ENCODE measurements at regions of chr6 and their contacts with region 1.

Region 1: DNA sequence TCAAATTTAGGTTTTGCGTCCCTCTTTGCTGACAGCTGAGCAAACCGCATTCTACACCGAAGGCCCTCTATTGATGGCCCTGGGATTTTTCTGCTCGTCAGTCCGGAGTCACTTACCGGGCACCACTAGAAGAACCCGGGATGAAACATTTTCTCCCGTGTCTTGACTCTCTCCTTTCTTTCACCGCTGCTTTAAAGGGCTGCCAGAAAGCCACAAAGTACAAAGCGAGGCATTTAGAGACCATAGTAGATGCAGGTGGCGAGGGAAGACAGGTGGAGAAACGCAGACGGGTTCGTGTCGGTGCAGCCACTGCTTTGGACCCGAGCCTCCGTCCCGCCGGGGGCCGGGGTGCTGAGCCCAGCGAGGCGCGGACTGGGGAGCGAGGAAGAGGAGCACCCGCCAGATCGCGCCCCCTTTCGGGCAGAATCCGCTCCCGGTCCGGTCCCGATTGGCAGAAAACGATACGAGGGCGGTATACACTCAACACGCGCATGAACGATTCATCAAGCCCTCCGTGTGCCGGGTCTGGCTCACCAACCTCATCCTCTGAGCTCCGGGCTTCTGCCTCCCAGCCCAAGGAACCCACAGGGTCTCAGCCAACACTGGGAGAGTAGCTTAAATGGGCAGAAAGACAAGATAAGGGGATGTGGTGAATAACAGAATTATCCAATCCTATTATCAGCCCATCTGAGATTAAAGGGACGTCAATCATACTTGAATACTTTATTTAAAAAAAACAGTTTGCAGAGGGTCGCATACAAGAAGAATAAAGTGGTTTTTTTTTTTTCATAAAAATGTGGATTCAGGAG is 84.9 kb downstream of the TRIM27 start:
- DNase-seq: peak; percentile 90 to 96 (median 92)
- ATAC-seq: peak; percentile 94
- H3K4me3 ChIP-seq: peak overlapping the region; percentile 74
- H3K27ac ChIP-seq: peak overlapping the region; percentile 86
- H3K4me1 ChIP-seq: peaks cover 0 to 8% of the 10 kb centered on the region in 2 experiments; a peak in 2 of 5 replicates
- H3K27me3 ChIP-seq: no peaks in the 10 kb centered on the region
- CTCF ChIP-seq: peak; percentile 84 to 93 (median 88)
- EP300 ChIP-seq: no peak; the same call in 1 of the 2 replicates
- POLR2A ChIP-seq: peak; percentile 80
- RAD21 ChIP-seq: peak; percentile 69 to 73

Region 2: GRCh38 chr6:28769626-28770402 is 69.0 kb before region 1 on chr6:
- CTCF ChIA-PET with region 1: interaction called, 5 read pairs
- POLR2A ChIA-PET with region 1: interaction called, 6 read pairs
- in situ Hi-C with region 1: no loop called
- intact Hi-C with region 1: loop called (anchors 2 kb)
- DNase-seq: peak; percentile 60 to 87 (median 66)
- ATAC-seq: peak; percentile 82
- H3K4me3 ChIP-seq: no peak overlapping the region
- H3K27ac ChIP-seq: no peak overlapping the region
- H3K4me1 ChIP-seq: peaks cover 24 to 32% of the 10 kb centered on the region in 2 experiments; a peak in 4 of 5 replicates
- H3K27me3 ChIP-seq: no peaks in the 10 kb centered on the region
- CTCF ChIP-seq: peak; percentile 72 to 80 (median 78)
- EP300 ChIP-seq: no peak
- POLR2A ChIP-seq: no peak
- RAD21 ChIP-seq: peak; percentile 88 to 92

Region 3: GRCh38 chr6:28816909-28817807 is 21.7 kb before region 1 on chr6:
- CTCF ChIA-PET with region 1: interaction called, 3 read pairs
- POLR2A ChIA-PET with region 1: interaction called, 10 read pairs
- in situ Hi-C with region 1: no loop called
- intact Hi-C with region 1: no loop called
- DNase-seq: peak; percentile 63 to 95 (median 76)
- ATAC-seq: peak; percentile 91
- H3K4me3 ChIP-seq: peak overlapping the region; percentile 45
- H3K27ac ChIP-seq: peak overlapping the region; percentile 59
- H3K4me1 ChIP-seq: peaks cover 7 to 11% of the 10 kb centered on the region in 2 experiments; a peak in 4 of 5 replicates
- H3K27me3 ChIP-seq: no peaks in the 10 kb centered on the region
- CTCF ChIP-seq: no peak
- EP300 ChIP-seq: peak; percentile 77
- POLR2A ChIP-seq: no peak
- RAD21 ChIP-seq: no peak; a peak in 1 of 4 replicates

Region 4: GRCh38 chr6:28895134-28895812 is 56.4 kb after region 1 on chr6:
- CTCF ChIA-PET with region 1: interaction called, 3 read pairs
- POLR2A ChIA-PET with region 1: interaction called, 12 read pairs
- in situ Hi-C with region 1: no loop called
- intact Hi-C with region 1: no loop called
- DNase-seq: peak; percentile 79 to 99 (median 88)
- ATAC-seq: peak; percentile 84
- H3K4me3 ChIP-seq: peak overlapping the region; percentile 49
- H3K27ac ChIP-seq: peak overlapping the region; percentile 98
- H3K4me1 ChIP-seq: peaks cover 14 to 15% of the 10 kb centered on the region in 2 experiments; a peak in 4 of 5 replicates
- H3K27me3 ChIP-seq: no peaks in the 10 kb centered on the region
- CTCF ChIP-seq: no peak
- EP300 ChIP-seq: no peak
- POLR2A ChIP-seq: peak; percentile 96
- RAD21 ChIP-seq: no peak

Region 5: DNA sequence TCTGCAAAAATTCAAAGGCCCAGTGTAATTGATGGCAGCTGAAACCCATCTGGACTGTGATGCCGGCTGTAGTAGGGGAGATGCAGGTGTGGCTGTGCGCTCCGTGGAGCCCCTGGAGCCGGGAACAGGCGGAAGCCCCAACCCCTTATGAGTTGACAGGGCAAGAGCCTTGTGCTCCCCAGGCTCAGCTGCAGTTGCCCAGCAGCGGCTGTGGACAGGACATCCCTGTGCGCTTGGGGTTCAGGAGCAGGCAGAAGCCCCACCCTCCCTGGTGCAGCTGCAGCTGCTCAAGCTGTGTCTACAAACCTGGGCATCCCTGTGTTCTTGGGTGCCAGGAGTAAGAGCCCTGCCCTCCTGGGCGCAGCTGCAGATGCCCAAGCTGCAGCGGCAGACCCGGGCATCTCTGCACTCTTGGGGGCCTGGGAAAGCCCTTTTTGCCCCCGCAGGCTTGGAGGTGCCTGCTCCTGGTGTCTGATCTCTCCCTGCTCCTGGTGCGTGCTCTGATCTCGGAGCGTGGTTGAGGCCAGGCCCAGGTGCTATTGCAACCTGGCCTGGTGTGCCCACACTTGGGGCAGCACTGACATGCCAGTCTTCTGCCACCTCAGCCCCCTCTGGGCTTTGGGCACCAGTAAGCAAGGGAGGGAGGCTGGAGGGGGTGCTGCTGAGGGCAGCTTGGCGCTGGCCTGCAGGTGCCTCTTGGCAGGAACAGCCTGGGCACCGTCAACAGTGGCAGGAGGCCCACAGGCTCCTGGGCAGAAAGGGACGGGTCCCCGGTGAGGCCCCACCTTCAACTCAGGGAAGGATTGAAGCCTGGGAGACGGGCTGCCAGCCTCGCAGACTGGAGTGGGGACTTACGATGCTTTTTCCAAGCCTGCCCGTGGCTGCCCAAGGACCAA is 362.2 kb after region 1 on chr6:
- CTCF ChIA-PET with region 1: no interaction called
- POLR2A ChIA-PET with region 1: no interaction called
- in situ Hi-C with region 1: loop called (anchors 25 kb)
- intact Hi-C with region 1: no loop called
- DNase-seq: no peak
- ATAC-seq: no peak
- H3K4me3 ChIP-seq: no peak overlapping the region
- H3K27ac ChIP-seq: no peak overlapping the region
- H3K4me1 ChIP-seq: no peaks in the 10 kb centered on the region
- H3K27me3 ChIP-seq: no peaks in the 10 kb centered on the region
- CTCF ChIP-seq: no peak
- EP300 ChIP-seq: no peak
- POLR2A ChIP-seq: no peak
- RAD21 ChIP-seq: no peak

Region 6: DNA sequence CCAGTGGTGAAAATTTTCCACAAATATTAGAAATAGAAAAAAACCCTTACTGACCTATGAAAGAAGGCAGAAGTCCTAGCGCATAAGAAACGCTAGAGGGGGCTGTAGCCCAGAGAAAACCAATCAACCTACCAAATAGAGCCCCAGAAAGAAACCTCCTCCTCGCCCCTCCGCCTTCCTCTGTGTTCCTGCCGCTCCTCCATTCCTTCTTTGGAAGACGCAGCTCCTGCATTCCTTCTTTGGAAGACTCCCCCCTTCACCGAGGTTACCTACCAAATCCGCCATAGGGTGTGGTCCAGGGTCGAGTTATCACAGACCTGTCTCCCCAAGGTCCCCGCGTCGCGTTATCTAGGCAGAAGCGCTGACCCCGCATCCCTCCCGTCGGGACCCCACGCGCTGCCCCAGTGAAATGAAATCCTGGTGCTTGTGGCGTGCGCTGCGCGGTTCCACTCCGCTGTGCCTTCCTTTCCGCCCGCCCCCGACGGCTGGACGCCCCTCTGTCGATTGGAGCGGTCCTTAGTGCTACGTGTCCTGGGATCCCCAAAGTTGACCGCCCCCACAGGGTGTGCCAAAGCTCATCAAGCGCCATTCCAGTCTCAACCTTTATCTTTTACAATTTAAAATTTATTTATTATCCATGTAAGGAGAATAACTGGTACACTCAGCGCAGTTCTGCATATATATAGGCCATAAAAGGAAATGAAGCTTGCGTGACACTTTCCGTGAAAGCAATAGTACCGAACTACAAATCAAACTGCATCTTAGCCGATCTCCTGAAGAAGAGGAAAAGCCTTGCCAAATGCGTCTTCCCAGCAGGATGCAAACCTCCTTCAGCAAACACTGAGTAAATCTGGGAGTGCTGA is 1519.1 kb after region 1 on chr6:
- CTCF ChIA-PET with region 1: no interaction called
- POLR2A ChIA-PET with region 1: no interaction called
- in situ Hi-C with region 1: no loop called
- intact Hi-C with region 1: no loop called
- DNase-seq: peak; percentile 51 to 75 (median 64)
- ATAC-seq: peak; percentile 94
- H3K4me3 ChIP-seq: no peak overlapping the region
- H3K27ac ChIP-seq: no peak overlapping the region
- H3K4me1 ChIP-seq: peaks cover 0 to 5% of the 10 kb centered on the region in 2 experiments; a peak in 3 of 5 replicates
- H3K27me3 ChIP-seq: peaks cover 27% of the 10 kb centered on the region in 2 experiments
- CTCF ChIP-seq: peak; percentile 75 to 88 (median 79)
- EP300 ChIP-seq: no peak
- POLR2A ChIP-seq: no peak
- RAD21 ChIP-seq: peak; percentile 29 to 62; a peak in 3 of 4 replicates